Left cardiac atrium (tissue), 4 donors: ENCODE measurements at regions of chr17 and their contacts with region 1.

Region 1: GRCh38 chr17:35088881-35089585 is 25.5 kb upstream of the RFFL start:
- DNase-seq: peak; percentile 87
- ATAC-seq: peak; percentile 98

Region 2: GRCh38 chr17:34998205-34998604 is 90.8 kb before region 1 on chr17:
- intact Hi-C with region 1: loop called in 1 of 2 experiments (anchors 5 kb)
- DNase-seq: peak; percentile 61
- ATAC-seq: peak; percentile 74 to 83

Region 3: DNA sequence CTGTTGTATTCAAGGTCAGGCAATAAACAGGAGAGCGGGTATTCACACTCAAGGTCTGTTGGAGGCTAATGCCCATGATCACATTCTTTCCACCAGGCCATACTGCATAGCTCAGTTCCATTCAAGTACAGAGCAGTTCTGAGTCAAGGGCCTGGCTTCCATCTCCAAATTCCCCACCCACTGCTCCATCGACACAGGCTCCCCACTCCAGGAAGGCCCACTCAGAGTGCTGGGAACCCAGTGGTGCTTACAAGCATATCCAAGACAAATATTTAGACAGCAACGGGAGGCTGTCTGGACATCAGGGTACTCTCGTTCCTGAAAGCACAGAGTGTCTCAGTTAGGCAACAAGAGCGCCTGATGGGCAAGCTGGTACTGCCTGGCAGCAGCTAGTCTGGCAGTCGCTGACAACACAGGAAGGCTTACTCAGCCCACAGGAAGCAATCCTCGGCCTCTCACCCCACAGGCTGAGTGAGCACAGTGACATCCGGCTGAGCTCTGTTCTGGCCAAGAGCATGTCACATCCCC is 66.4 kb before region 1 on chr17:
- intact Hi-C with region 1: loop called in 1 of 2 experiments (anchors 2 kb)
- DNase-seq: peak; percentile 86
- ATAC-seq: peak; percentile 92 to 96

Region 4: GRCh38 chr17:35141681-35142466 is 52.8 kb after region 1 on chr17 and contains the start of gene NLE1:
- intact Hi-C with region 1: no loop called
- DNase-seq: peak; percentile 88
- ATAC-seq: peak; percentile 93 to 94
- total RNA-seq, gene NLE1: 5.5 to 6.7 TPM